ENCODE measurements at regions of chr3 and their contacts with region 1.

Region 1: GRCh38 chr3:8301728-8302462 is 199.7 kb upstream of the LMCD1 start:
- DNase-seq: peak; percentile 33 to 61
- ATAC-seq: peak; percentile 59 to 86; a peak in 4 of 6 replicates
- H3K4me3 ChIP-seq: no peak overlapping the region
- H3K27ac ChIP-seq: no peak overlapping the region
- H3K4me1 ChIP-seq: no peaks in the 10 kb centered on the region
- CTCF ChIP-seq: peak; percentile 71
- EP300 ChIP-seq: no peak
- POLR2A ChIP-seq: no peak
- RAD21 ChIP-seq: peak; percentile 67 to 75; a peak in 4 of 5 replicates

Region 2: GRCh38 chr3:8050283-8050682 is 251.6 kb before region 1 on chr3:
- CTCF ChIA-PET with region 1: no interaction called
- POLR2A ChIA-PET with region 1: no interaction called
- DNase-seq: no peak
- ATAC-seq: no peak
- H3K4me3 ChIP-seq: no peak overlapping the region
- H3K27ac ChIP-seq: no peak overlapping the region
- H3K4me1 ChIP-seq: no peaks in the 10 kb centered on the region
- CTCF ChIP-seq: no peak
- EP300 ChIP-seq: no peak
- POLR2A ChIP-seq: no peak
- RAD21 ChIP-seq: no peak

Region 3: DNA sequence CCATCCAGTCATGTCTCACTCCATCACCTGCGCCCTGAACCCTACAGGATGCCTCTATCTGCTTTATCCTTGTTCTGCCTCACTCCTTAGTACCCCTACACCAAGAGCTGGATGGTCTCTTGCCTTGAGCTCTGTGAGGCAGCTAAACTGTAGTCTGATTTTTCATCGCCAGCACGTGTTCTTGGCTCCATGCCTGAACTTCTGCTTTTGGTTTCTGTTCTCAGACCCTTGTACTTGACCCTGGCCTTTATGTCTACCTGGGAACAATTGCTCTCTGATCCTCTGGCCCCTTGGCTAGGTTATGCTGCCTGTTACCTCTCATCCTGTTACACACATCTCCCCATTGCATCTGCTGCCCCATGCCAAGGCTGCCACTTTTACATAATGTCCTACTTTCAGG is 118.3 kb before region 1 on chr3:
- CTCF ChIA-PET with region 1: no interaction called
- POLR2A ChIA-PET with region 1: no interaction called
- DNase-seq: no peak
- ATAC-seq: no peak
- H3K4me3 ChIP-seq: no peak overlapping the region
- H3K27ac ChIP-seq: no peak overlapping the region
- H3K4me1 ChIP-seq: no peaks in the 10 kb centered on the region
- CTCF ChIP-seq: no peak
- EP300 ChIP-seq: no peak
- POLR2A ChIP-seq: no peak
- RAD21 ChIP-seq: no peak

Region 4: DNA sequence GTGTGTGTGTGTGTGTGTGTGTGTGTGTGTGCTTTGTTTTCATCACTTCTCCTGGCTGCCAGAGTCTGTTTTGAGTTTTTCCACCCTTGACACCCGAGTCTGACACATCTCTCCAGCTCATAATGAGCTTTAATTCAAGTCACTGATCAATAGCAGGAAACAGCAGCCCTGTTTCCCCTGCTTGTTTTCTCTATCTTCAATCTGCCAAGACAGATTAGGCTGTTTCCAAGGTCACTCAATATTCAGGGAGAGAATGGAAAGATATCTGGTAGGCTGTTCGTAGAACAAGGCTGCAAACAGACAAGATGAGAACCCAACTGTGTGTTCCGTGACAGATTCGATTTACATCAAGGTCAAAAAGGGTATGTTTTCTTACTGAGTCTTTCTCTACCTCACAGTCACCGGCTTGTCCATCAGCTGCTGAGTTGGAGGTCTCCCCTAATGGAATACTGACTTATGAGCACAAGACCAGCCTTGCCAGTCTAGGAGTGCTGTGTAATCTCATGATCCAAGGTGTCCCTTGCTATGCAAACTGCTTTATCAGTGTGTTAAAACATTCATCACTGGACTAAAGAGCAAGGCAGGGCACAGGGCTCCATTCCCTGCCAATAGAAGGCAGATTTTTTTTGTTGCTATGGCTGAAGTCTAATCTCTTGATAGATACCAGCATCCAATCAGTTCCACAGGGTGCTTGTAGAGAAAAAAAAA is 11.8 kb after region 1 on chr3:
- CTCF ChIA-PET with region 1: interaction called, 10 read pairs
- POLR2A ChIA-PET with region 1: no interaction called
- DNase-seq: no peak
- ATAC-seq: no peak
- H3K4me3 ChIP-seq: no peak overlapping the region
- H3K27ac ChIP-seq: no peak overlapping the region
- H3K4me1 ChIP-seq: no peaks in the 10 kb centered on the region
- CTCF ChIP-seq: no peak
- EP300 ChIP-seq: no peak
- POLR2A ChIP-seq: no peak
- RAD21 ChIP-seq: no peak

Measured in A549 (cell line).